ENCODE measurements at regions of chr15 and their contacts with region 1.

Region 1: GRCh38 chr15:78108299-78109084 is 16.1 kb downstream of the SH2D7 start:
- DNase-seq: peak; percentile 87
- ATAC-seq: peak; percentile 94
- H3K4me3 ChIP-seq: no peak overlapping the region
- H3K27ac ChIP-seq: no peak overlapping the region
- H3K4me1 ChIP-seq: no peaks in the 10 kb centered on the region
- H3K27me3 ChIP-seq: no peaks in the 10 kb centered on the region
- CTCF ChIP-seq: peak; percentile 94

Region 2: DNA sequence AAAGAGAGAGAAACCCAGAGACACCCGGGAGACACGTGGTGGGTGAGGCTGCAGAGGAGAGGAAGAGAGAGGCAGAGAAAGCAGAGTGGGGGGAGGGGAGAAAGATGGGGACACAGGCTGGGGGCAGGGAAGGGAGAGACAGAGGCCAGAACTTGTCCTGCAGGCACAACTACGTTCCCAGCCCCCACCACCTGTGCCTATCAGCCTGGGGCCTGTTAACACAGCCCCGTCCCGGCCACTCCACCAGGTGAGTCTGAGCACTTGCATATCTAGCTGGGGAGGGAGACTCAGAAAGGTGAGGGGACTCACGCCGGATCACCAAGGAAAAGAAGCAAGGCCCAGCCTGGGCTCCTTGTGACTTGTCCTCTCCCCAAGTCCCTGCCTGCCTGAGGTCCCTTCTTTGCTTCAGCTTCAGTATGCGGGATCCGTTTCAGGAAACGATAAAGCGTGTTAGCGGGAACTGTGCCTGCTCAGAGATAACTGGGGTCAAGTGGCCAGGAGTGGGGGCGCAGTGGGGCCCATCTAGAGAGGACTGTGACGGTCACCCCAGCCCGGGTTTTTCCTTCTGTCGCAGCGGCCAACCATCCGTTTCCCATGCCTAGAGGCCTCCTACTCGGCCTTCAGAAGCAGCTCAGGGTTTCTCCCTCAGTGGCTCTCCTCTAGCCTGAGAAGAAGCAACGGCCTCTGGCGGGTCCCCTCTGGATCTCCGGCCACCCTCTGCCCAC is 486.1 kb before region 1 on chr15:
- CTCF ChIA-PET with region 1: no interaction called
- POLR2A ChIA-PET with region 1: no interaction called
- intact Hi-C with region 1: no loop called
- DNase-seq: no peak
- ATAC-seq: no peak
- H3K4me3 ChIP-seq: no peak overlapping the region
- H3K27ac ChIP-seq: no peak overlapping the region
- H3K4me1 ChIP-seq: no peaks in the 10 kb centered on the region
- H3K27me3 ChIP-seq: no peaks in the 10 kb centered on the region
- CTCF ChIP-seq: no peak

Region 3: DNA sequence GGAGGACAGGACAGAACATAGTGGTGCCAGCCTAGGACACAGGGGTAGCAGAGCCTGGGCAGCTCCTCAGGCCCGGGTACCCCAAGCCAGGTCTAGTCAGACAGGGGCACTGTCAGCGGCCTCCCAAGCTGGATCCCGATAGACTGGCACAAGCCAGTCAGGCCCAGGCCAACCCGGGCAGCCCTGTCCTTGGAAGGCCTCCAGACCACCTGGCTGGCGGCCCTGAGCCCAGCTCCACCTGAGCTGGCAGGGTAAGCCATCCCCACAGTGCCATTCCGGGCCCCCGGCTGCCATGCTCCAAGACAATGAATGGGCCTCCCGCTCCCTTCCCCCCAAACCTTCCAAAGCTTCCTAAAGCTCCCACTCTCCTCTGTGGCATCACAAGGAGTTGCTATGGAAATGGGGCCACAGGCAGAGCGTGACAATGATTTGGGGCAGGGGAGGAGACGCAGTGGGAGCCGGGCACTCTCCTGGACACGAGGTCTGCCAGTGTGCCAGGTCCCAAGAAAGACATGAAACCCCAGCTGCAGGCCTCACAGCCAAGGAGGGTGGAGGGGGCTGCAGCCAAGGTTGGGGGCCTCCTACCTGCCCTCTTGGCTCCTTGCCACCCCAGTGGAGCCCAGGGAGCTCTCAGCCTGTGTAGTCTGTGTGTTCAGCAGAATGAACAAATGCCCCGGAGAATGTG is 310.2 kb before region 1 on chr15:
- CTCF ChIA-PET with region 1: no interaction called
- POLR2A ChIA-PET with region 1: no interaction called
- intact Hi-C with region 1: no loop called
- DNase-seq: no peak
- ATAC-seq: no peak
- H3K4me3 ChIP-seq: no peak overlapping the region
- H3K27ac ChIP-seq: no peak overlapping the region
- H3K4me1 ChIP-seq: no peaks in the 10 kb centered on the region
- H3K27me3 ChIP-seq: peaks cover 7% of the 10 kb centered on the region; the same call in 1 of the 2 replicates
- CTCF ChIP-seq: no peak

Region 4: GRCh38 chr15:77959432-77959879 is 149.0 kb before region 1 on chr15:
- CTCF ChIA-PET with region 1: interaction called, 11 read pairs
- POLR2A ChIA-PET with region 1: no interaction called
- intact Hi-C with region 1: loop called (anchors 1 kb)
- DNase-seq: peak; percentile 79
- ATAC-seq: peak; percentile 96
- H3K4me3 ChIP-seq: peak overlapping the region; percentile 59
- H3K27ac ChIP-seq: no peak overlapping the region
- H3K4me1 ChIP-seq: no peaks in the 10 kb centered on the region
- H3K27me3 ChIP-seq: no peaks in the 10 kb centered on the region
- CTCF ChIP-seq: peak; percentile 83

Region 5: DNA sequence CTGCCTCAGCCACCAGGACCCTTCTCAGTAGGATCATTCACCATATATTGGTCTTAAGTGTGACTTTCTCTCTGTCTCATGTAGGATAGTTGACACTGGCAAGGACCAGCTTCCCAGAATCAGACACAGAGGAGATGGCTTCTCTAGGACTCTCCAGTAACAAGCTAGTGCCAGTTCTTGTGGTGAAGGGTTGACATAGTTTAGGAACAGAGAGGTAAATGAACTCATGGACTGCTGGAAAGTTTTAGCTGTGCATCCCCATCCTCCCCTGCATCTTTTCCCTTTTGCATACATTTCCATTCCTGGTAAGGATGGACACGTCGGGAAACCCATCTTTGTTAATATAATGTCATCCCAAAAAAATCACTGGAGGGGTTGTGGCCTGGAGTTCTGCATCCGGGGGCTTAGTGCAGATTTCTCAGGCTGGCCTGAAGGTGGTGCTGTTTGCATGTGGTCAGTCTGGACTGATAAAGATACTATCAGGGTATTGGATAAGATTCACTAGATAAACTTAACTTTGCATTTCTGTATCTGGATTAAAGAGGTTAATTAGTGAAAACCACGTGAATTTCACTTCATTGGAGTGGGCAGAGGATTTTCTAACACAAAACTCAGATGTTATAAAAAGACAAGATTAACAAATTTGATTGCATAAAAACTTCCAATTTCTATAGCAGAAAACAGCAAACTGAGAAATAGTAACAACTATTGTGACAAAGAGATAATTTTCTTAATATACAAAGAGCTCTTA is 141.8 kb before region 1 on chr15:
- CTCF ChIA-PET with region 1: interaction called, 8 read pairs
- POLR2A ChIA-PET with region 1: no interaction called
- intact Hi-C with region 1: loop called (anchors 1 kb)
- DNase-seq: peak; percentile 57
- ATAC-seq: peak; percentile 68; the same call in 1 of the 2 replicates
- H3K4me3 ChIP-seq: no peak overlapping the region
- H3K27ac ChIP-seq: no peak overlapping the region
- H3K4me1 ChIP-seq: no peaks in the 10 kb centered on the region
- H3K27me3 ChIP-seq: no peaks in the 10 kb centered on the region
- CTCF ChIP-seq: peak; percentile 93

Region 6: DNA sequence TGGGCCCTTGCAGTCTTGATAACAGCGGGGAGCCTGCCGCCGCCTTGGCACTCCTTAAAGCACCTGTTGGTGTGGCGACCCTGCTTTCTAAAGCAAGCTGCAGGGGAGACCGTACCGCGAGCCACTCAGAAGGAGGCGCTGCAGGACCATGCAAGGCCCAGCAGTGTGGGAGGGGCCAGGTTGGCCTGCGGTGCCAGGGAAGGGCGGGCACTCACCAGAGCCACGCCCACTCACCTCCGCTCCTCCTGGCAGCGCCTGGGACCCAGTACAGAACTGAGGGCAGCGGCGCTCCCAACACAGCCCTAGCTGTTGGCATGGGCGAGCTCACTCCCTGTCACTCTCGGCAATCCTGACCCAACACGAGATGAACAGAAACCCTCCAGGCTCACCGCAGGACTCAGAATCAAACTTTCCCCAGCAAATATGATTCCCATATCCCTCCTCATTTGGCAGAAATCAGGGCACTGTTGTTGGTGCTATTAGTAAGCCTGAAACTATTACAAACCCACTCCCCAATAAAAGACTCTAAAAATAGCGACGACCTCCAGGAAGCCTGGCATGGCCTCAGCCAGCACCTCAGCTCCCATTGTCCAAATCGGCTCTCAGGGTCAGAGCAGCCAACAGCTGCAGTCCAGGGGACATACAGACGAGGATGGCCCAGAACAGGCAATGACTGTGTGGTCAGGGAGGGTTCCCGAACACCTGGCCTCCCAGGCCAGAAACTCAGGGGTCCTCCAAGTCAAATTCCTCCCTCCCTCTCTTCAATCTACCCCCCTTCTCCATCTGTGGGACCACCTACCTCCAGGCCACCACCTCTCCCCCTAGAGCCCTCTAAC is 108.2 kb before region 1 on chr15:
- CTCF ChIA-PET with region 1: interaction called, 6 read pairs
- POLR2A ChIA-PET with region 1: no interaction called
- intact Hi-C with region 1: loop called (anchors 1 kb)
- DNase-seq: peak; percentile 56
- ATAC-seq: peak; percentile 72
- H3K4me3 ChIP-seq: no peak overlapping the region
- H3K27ac ChIP-seq: no peak overlapping the region
- H3K4me1 ChIP-seq: peaks cover 6% of the 10 kb centered on the region; the same call in 1 of the 2 replicates
- H3K27me3 ChIP-seq: no peaks in the 10 kb centered on the region
- CTCF ChIP-seq: peak; percentile 63

Region 7: DNA sequence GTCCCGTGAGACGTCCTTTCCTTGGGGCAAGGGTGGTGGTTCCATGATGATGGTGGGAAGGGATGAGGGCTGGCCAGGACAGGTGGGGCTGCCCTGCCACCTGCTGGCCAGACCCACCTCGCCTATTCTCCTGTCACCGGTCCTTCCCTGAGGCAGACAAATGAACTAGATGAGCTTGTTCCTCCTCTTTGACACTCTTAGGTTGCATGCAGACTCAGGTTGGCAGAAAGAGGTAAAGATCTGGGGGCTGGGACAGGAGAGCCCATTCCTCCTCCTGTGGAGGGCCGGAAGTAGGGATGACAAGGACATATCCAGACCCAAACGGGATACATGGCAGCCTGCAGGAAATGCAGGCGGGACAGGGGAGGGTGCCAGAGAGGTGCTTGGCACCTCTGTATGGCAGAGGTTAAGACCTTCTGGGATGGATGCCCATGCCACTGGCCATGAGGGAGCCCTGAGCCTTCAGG is 87.3 kb after region 1 on chr15:
- CTCF ChIA-PET with region 1: interaction called, 8 read pairs
- POLR2A ChIA-PET with region 1: no interaction called
- intact Hi-C with region 1: loop called (anchors 1 kb)
- DNase-seq: peak; percentile 54
- ATAC-seq: peak; percentile 86
- H3K4me3 ChIP-seq: no peak overlapping the region
- H3K27ac ChIP-seq: no peak overlapping the region
- H3K4me1 ChIP-seq: no peaks in the 10 kb centered on the region
- H3K27me3 ChIP-seq: no peaks in the 10 kb centered on the region
- CTCF ChIP-seq: peak; percentile 90

Region 8: GRCh38 chr15:78241007-78241406 is 132.5 kb after region 1 on chr15:
- CTCF ChIA-PET with region 1: interaction called, 8 read pairs
- POLR2A ChIA-PET with region 1: no interaction called
- intact Hi-C with region 1: loop called (anchors 1 kb)
- DNase-seq: peak; percentile 81
- ATAC-seq: peak; percentile 98
- H3K4me3 ChIP-seq: no peak overlapping the region
- H3K27ac ChIP-seq: no peak overlapping the region
- H3K4me1 ChIP-seq: no peaks in the 10 kb centered on the region
- H3K27me3 ChIP-seq: no peaks in the 10 kb centered on the region
- CTCF ChIP-seq: peak; percentile 78

Region 9: GRCh38 chr15:78415286-78415685 is 306.8 kb after region 1 on chr15:
- CTCF ChIA-PET with region 1: no interaction called
- POLR2A ChIA-PET with region 1: no interaction called
- intact Hi-C with region 1: loop called (anchors 5 kb)
- DNase-seq: peak; percentile 63
- ATAC-seq: peak; percentile 78
- H3K4me3 ChIP-seq: no peak overlapping the region
- H3K27ac ChIP-seq: no peak overlapping the region
- H3K4me1 ChIP-seq: peaks cover 4% of the 10 kb centered on the region; the same call in 1 of the 2 replicates
- H3K27me3 ChIP-seq: no peaks in the 10 kb centered on the region
- CTCF ChIP-seq: peak; percentile 66

Measured in PC-3 (cell line).